ENCODE measurements at regions of chr1 and their contacts with region 1.

Region 1: DNA sequence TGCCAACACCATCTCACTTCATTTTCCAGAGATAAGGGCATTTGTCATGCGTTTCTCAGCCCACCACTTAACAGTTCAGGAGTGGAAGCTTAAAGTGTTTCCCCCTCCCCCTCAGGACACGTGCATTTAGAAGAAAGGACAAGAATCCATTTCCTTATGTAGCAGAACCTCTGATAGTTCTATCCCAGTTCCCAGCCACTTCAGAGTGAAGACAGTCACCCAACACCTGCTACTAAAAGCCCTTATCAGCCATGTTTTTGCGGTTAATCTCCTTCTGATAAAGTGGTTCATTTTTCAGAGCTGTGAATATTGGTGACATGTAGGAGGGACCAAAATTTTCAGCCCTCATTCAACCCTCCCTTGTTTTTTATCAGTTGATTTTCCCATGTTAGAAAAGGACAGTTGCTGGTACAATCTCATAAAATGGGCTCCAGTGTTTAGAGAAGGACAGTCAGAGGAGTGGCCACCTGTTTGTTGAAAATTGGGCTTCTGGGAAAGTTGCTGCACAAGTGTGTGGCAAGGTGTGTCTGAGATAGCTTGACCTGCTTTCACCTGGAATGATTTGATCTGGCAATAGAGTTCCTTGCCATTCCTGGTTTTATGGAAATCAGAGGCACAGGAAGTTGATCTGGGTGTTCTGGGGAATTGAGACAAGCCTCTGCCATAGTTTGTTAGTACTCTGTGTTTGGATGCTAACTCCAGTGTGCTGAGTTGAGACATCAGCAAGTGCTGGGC is 114.0 kb downstream of the PPP1R12B start:
- DNase-seq: no peak
- ATAC-seq: no peak; the same call in 1 of the 2 replicates
- H3K4me3 ChIP-seq: no peak overlapping the region
- H3K27ac ChIP-seq: no peak overlapping the region
- H3K4me1 ChIP-seq: peaks cover 31% of the 10 kb centered on the region
- H3K27me3 ChIP-seq: no peaks in the 10 kb centered on the region
- CTCF ChIP-seq: no peak

Region 2: GRCh38 chr1:202348509-202349205 is 113.9 kb before region 1 on chr1 and contains the start of gene PPP1R12B:
- CTCF ChIA-PET with region 1: no interaction called
- POLR2A ChIA-PET with region 1: no interaction called
- intact Hi-C with region 1: loop called (anchors 5 kb)
- DNase-seq: peak; percentile 96
- ATAC-seq: peak; percentile 97
- H3K4me3 ChIP-seq: peak within 1 kb of the TSS; percentile 98
- H3K27ac ChIP-seq: peak within 1 kb of the TSS; percentile 34
- H3K4me1 ChIP-seq: 0 out of 2 replicates have a peak, but pooled peaks cover 9% of the 10 kb centered on the region
- H3K27me3 ChIP-seq: no peaks in the 10 kb centered on the region
- CTCF ChIP-seq: no peak
- total RNA-seq, gene PPP1R12B: 2.0 and 6.6 TPM in 2 replicates

Region 3: GRCh38 chr1:202438432-202439174 is 23.9 kb before region 1 on chr1:
- CTCF ChIA-PET with region 1: no interaction called
- POLR2A ChIA-PET with region 1: no interaction called
- intact Hi-C with region 1: no loop called
- DNase-seq: no peak
- ATAC-seq: no peak
- H3K4me3 ChIP-seq: no peak overlapping the region
- H3K27ac ChIP-seq: no peak overlapping the region
- H3K4me1 ChIP-seq: no peaks in the 10 kb centered on the region
- H3K27me3 ChIP-seq: no peaks in the 10 kb centered on the region
- CTCF ChIP-seq: no peak

Region 4: DNA sequence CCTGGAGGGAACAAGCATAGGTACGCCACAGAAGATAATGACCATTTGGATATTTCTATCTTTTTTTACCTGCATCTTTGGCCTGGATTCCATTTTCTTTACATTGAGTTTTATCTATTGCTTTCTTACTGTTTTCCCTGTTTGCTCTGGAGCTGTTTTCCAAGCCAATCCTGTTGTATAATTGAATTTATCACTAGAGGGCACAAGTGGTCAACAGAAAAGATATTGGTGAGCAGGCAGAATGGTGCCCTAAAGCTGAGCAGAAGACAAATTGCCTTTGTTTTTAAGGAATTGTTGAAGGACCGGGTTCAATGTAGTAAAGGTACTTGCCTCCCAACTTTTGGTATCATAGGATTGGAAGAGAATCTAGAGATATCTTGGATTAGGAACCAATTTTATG is 38.8 kb after region 1 on chr1:
- CTCF ChIA-PET with region 1: no interaction called
- POLR2A ChIA-PET with region 1: no interaction called
- intact Hi-C with region 1: loop called (anchors 2 kb)
- DNase-seq: peak; percentile 52
- ATAC-seq: no peak; the same call in 1 of the 2 replicates
- H3K4me3 ChIP-seq: no peak overlapping the region
- H3K27ac ChIP-seq: no peak overlapping the region
- H3K4me1 ChIP-seq: no peaks in the 10 kb centered on the region
- H3K27me3 ChIP-seq: no peaks in the 10 kb centered on the region
- CTCF ChIP-seq: peak; percentile 47; the same call in 1 of the 2 replicates

Region 5: DNA sequence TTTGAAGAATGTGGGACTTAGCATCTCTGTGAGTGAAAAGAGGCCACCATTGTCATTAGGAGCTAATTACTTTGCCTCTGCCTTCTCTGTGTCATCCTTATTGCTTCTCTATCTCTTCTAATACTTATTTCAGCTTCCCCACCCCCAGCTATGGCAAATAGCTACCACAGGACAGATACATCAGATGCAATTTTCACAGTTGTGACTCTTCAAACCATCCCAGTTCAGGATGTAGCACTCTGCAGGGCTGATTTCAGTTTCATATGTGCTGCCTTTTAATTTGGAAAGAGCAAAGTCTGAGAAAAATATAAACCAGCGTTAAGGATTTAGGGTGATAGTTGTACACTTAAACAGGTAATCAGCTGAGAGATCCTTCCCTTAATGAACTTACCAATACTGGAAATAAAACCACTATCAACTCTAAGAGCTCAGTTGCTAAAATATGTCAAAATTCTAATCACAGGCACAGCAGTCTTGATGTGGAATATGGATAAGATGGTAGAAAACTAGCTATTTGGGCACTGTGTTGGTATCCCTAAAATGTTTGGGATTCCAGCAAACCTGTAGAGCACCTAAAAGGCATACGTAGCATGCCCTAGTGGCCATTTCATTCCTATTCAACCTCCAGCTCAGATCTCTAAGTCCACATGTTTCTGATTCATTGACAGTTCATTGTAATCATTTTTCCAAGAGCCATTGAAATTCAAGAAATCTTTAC is 99.4 kb after region 1 on chr1:
- CTCF ChIA-PET with region 1: no interaction called
- POLR2A ChIA-PET with region 1: no interaction called
- intact Hi-C with region 1: no loop called
- DNase-seq: no peak
- ATAC-seq: no peak
- H3K4me3 ChIP-seq: no peak overlapping the region
- H3K27ac ChIP-seq: no peak overlapping the region
- H3K4me1 ChIP-seq: no peaks in the 10 kb centered on the region
- H3K27me3 ChIP-seq: no peaks in the 10 kb centered on the region
- CTCF ChIP-seq: no peak; the same call in 1 of the 2 replicates

Region 6: GRCh38 chr1:202599677-202600431 is 137.3 kb after region 1 on chr1:
- CTCF ChIA-PET with region 1: interaction called, 6 read pairs
- POLR2A ChIA-PET with region 1: no interaction called
- intact Hi-C with region 1: loop called (anchors 2 kb)
- DNase-seq: peak; percentile 63
- ATAC-seq: peak; percentile 99
- H3K4me3 ChIP-seq: no peak overlapping the region
- H3K27ac ChIP-seq: no peak overlapping the region
- H3K4me1 ChIP-seq: no peaks in the 10 kb centered on the region
- H3K27me3 ChIP-seq: no peaks in the 10 kb centered on the region
- CTCF ChIP-seq: peak; percentile 79

Region 7: GRCh38 chr1:202713110-202713509 is 250.6 kb after region 1 on chr1:
- CTCF ChIA-PET with region 1: no interaction called
- POLR2A ChIA-PET with region 1: no interaction called
- intact Hi-C with region 1: loop called (anchors 2 kb)
- DNase-seq: peak; percentile 78
- ATAC-seq: peak; percentile 95
- H3K4me3 ChIP-seq: no peak overlapping the region
- H3K27ac ChIP-seq: peak overlapping the region; percentile 18; the same call in 1 of the 2 replicates
- H3K4me1 ChIP-seq: peaks cover 13% of the 10 kb centered on the region
- H3K27me3 ChIP-seq: peaks cover 22% of the 10 kb centered on the region
- CTCF ChIP-seq: no peak